ENCODE measurements at regions of chr18 and their contacts with region 1.

Region 1: GRCh38 chr18:62131301-62131909 is 55.5 kb downstream of the PIGN start:
- DNase-seq: peak in 1 of 2 donors; percentile 39
- H3K4me3 ChIP-seq: no peak overlapping the region
- H3K27ac ChIP-seq: no peak overlapping the region
- H3K4me1 ChIP-seq: peaks cover 0 to 6% (median 0%) of the 10 kb centered on the region in 4 donors
- H3K27me3 ChIP-seq: no peaks in the 10 kb centered on the region
- CTCF ChIP-seq: peak; percentile 91 to 93

Region 2: DNA sequence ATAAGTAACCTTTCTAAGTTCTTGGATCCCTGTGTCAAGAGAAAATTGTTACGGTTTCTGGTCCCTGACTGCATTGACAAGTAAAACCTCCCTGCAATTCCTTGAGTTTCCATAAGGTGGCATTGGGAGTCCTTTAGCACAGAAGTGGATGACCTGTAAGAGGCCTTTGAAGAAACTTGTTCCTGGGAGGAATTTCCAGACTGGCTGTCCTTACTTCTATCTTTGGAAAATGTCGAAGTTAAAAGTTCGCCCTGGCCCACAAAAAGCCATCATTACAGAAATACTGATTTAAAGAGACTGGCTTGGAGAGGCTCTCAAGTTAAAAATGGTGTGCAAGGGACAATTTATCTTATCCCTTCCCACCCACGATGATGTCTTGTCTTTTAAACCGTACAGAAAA is 579.8 kb before region 1 on chr18:
- intact Hi-C with region 1: loop called (anchors 5 kb)
- DNase-seq: no peak
- H3K4me3 ChIP-seq: no peak overlapping the region
- H3K27ac ChIP-seq: no peak overlapping the region
- H3K4me1 ChIP-seq: peaks cover 0 to 6% (median 0%) of the 10 kb centered on the region in 4 donors
- H3K27me3 ChIP-seq: no peaks in the 10 kb centered on the region
- CTCF ChIP-seq: peak; percentile 83 to 88

Region 3: DNA sequence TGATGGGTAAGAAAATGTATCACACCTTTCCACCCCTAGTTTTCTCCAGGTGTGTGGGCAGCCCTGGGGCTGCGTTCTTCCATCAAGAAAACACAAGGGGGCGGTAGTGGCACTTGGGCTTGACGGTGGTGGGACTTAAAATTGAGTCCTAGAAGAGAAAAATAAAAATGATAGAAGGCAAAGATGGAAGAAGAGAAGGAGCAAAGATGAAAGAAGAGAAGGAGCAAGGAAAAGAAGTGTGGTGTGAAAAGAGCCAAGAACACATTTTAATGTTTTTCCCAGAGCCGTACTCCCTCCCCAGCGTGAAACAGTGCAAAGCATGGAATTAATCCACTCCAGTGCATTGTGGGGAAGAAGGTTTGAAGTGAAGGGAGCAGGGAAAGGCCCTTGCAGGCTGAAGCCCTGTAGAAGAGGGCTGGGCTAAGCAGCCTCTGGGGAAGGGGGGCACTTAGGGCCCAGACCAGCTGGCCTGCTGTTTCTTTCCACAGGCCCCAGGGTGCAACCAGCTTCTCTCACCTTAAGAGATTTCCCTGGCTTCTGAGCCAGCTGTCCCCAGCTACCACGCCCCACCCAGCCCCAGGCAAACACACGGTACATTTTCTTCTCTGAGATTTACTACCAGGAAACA is 495.4 kb before region 1 on chr18:
- intact Hi-C with region 1: loop called (anchors 5 kb)
- DNase-seq: peak; percentile 45 to 81
- H3K4me3 ChIP-seq: no peak overlapping the region
- H3K27ac ChIP-seq: peak overlapping the region; percentile 63 to 65
- H3K4me1 ChIP-seq: peaks cover 0 to 33% (median 19%) of the 10 kb centered on the region in 4 donors
- H3K27me3 ChIP-seq: no peaks in the 10 kb centered on the region
- CTCF ChIP-seq: peak; percentile 90 to 91

Region 4: GRCh38 chr18:61893971-61894750 is 237.2 kb before region 1 on chr18:
- intact Hi-C with region 1: loop called (anchors 10 kb)
- DNase-seq: peak; percentile 79 to 93
- H3K4me3 ChIP-seq: peak overlapping the region; percentile 92 to 93
- H3K27ac ChIP-seq: peak overlapping the region; percentile 92 to 93
- H3K4me1 ChIP-seq: peaks cover 0 to 45% (median 19%) of the 10 kb centered on the region in 4 donors
- H3K27me3 ChIP-seq: no peaks in the 10 kb centered on the region
- CTCF ChIP-seq: peak; percentile 46 to 50

Region 5: DNA sequence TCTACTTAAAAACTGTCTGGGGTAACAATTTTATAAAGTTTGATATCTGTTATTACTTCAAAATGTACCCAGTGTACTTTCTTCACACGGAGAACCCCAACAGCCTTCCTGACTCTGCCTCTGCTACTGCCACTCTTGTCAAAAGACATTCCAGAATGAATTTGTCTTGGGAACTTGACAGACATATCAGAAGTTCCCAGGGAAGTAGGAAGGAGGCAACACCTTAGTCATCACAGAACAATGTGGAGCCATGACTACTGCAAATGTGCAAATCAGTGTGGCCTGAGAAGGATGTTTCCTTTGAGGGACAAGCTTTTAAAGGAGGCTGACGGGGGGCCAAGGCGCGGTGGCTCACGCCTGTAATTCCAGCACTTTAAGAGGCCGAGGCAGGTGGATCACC is 104.8 kb before region 1 on chr18:
- intact Hi-C with region 1: no loop called
- DNase-seq: no peak
- H3K4me3 ChIP-seq: no peak overlapping the region
- H3K27ac ChIP-seq: no peak overlapping the region
- H3K4me1 ChIP-seq: no peaks in the 10 kb centered on the region
- H3K27me3 ChIP-seq: no peaks in the 10 kb centered on the region
- CTCF ChIP-seq: no peak

Measured in tibial artery (tissue), 4 donors.